ENCODE measurements at regions of chr3 and their contacts with region 1.

Region 1: DNA sequence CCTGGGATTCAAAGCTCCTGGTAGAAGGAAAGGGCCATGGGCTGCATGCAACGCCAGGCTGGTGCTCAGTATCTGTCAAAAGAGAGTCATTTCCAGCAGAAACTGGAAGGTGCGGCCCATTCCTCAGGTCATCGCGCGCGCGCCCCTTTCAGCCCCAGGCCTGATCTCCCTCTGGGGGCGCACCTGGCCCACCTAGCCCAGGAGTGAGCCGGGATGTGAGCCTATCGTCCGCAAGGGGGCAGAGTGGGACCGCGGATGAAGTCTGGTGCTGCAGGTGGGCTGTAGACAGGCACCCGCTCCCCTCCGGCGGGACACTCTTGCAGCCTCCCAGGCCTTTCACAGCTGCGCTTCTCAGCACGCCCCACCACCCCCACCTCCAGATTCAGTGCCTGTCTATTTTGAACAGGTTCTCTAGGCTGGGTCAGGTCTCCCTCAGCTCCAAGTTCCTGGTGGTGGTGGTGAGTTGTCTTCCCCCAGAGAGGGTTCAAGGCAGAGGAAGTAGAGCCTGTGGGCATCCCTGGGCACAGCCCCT is 5.8 kb upstream of the RPL29 start:
- DNase-seq: peak; percentile 77
- H3K4me3 Mint-ChIP-seq: no peak overlapping the region
- H3K27ac Mint-ChIP-seq: no peak overlapping the region
- H3K4me1 Mint-ChIP-seq: peaks cover 8% of the 10 kb centered on the region
- H3K27me3 Mint-ChIP-seq: no peaks in the 10 kb centered on the region
- CTCF ChIP-seq: peak; percentile 97

Region 2: GRCh38 chr3:51860703-51861665 is 140.5 kb before region 1 on chr3 and contains the start of gene IQCF2:
- CTCF ChIA-PET with region 1: no interaction called
- POLR2A ChIA-PET with region 1: no interaction called
- intact Hi-C with region 1: no loop called
- DNase-seq: no peak
- H3K4me3 Mint-ChIP-seq: no peak within 1 kb of the TSS
- H3K27ac Mint-ChIP-seq: no peak within 1 kb of the TSS
- H3K4me1 Mint-ChIP-seq: no peaks in the 10 kb centered on the region
- H3K27me3 Mint-ChIP-seq: peaks cover 41% of the 10 kb centered on the region
- CTCF ChIP-seq: no peak
- total RNA-seq, gene IQCF2: not detected in 2 replicates

Region 3: DNA sequence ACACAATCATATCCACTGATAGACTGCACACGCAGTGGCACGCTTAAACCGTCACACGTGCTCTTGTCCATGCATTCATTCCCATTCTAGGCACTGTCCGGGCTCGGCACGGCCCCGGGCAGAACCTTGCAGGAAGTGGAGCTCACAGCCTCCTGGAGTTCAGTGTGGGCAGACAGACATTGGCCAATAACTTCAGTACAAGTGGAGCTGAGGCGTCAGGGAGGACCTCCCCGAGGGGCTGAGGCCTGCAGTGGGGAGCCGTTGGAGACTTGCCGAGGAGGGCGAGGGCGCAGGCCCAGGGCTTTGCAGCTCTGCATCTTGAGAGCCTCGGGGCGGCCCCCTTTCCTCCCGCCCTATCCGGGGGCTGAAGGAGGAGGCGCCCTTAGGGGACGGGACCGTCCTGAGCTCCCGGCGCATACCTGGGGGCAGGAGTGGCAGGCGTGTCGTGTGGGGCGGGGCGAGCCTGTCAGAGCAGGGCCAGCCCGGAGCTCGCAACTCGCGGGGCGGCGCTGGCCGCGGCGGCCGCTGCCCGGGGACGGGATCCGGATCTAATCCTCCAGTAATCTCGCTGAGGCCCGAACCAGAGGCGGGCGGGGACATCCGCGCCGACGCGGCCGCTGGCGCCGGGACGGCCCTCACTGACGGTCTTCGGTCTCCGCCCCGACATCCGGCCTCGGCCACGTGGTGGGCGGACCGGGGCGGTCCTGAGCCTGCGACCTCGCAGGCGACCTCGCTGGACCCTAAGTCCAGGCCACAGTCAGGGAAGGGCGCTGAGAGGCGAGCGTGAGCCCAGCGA is 18.5 kb before region 1 on chr3 and contains the start of gene ACY1:
- CTCF ChIA-PET with region 1: interaction called, 14 read pairs
- POLR2A ChIA-PET with region 1: interaction called, 93 read pairs
- intact Hi-C with region 1: no loop called
- DNase-seq: peak; percentile 87
- H3K4me3 Mint-ChIP-seq: peak within 1 kb of the TSS; percentile 87
- H3K27ac Mint-ChIP-seq: peak within 1 kb of the TSS; percentile 98
- H3K4me1 Mint-ChIP-seq: peaks cover 25% of the 10 kb centered on the region
- H3K27me3 Mint-ChIP-seq: no peaks in the 10 kb centered on the region
- CTCF ChIP-seq: no peak
- total RNA-seq, gene ACY1: 109 and 164 TPM in 2 replicates

Region 4: DNA sequence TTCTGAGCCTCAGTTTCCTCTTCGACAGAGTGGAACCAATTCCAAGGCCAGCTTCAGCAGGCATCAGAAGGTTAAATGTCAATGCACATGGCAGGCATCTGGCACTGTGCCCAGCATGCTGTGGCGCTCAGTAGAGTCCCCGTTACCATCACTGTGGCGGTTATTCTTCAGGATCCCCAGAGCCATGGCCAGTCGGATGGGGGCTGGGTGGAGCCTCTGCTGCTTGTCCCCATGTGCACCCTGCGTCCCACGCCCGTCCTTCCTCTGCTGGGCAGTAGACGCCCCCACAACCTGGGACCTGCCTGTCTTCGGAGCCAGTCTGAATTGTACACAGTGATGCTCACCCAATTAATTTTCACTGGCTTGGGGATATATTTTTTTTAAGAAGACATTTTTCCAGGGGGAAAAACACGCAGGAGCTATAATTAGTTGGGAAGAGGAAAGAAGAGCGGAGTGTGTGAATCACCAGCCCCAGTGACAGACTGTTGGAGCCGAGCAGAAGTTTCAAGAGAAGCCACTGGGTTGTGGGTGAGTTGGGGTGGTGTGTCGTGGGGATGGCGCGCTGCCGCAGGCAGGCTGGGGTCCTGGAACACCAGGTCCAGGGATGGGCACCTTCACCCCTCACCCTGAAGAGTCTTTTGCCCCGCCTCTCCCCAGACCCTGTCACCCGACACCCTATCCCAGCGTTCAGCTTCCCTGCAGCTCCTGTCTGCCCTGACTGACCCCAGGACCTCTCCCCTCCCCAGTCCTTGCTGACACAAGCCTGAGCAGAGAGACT is 21.0 kb after region 1 on chr3:
- CTCF ChIA-PET with region 1: interaction called, 14 read pairs
- POLR2A ChIA-PET with region 1: no interaction called
- intact Hi-C with region 1: no loop called
- DNase-seq: no peak
- H3K4me3 Mint-ChIP-seq: no peak overlapping the region
- H3K27ac Mint-ChIP-seq: no peak overlapping the region
- H3K4me1 Mint-ChIP-seq: peaks cover 6% of the 10 kb centered on the region
- H3K27me3 Mint-ChIP-seq: no peaks in the 10 kb centered on the region
- CTCF ChIP-seq: no peak

Region 5: DNA sequence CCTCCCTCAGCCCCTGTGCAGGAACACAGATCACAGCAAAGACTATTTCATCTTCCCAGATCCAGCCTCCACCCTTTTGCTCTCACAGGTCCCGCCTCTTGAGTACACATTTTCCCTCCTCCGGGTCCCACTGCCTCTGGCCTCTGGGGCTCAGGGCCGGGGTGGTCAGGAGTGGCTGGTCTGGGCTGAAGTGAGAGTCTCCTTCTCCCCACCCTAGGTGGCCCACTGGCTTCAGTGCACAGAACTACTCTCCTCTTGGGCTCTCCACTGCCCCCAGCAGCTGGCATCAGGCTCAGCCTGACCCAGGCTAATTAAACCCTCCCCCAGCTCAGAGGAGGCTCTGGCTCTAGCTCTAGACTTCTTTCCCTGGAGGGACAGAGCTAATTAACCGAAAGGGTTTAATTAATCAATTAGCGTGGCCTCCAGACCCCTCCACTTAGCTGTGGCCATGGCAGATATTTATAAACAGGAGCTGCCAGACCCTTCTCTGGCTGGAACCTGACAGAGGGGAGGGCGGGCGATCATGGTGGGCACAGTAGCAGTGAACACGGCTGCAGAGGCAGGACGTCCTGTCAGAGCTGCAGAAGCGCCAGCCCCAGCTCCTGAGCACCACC is 39.7 kb after region 1 on chr3:
- CTCF ChIA-PET with region 1: interaction called, 15 read pairs
- POLR2A ChIA-PET with region 1: interaction called, 6 read pairs
- intact Hi-C with region 1: no loop called
- DNase-seq: no peak
- H3K4me3 Mint-ChIP-seq: no peak overlapping the region
- H3K27ac Mint-ChIP-seq: no peak overlapping the region
- H3K4me1 Mint-ChIP-seq: peaks cover 45% of the 10 kb centered on the region
- H3K27me3 Mint-ChIP-seq: no peaks in the 10 kb centered on the region
- CTCF ChIP-seq: no peak

Region 6: DNA sequence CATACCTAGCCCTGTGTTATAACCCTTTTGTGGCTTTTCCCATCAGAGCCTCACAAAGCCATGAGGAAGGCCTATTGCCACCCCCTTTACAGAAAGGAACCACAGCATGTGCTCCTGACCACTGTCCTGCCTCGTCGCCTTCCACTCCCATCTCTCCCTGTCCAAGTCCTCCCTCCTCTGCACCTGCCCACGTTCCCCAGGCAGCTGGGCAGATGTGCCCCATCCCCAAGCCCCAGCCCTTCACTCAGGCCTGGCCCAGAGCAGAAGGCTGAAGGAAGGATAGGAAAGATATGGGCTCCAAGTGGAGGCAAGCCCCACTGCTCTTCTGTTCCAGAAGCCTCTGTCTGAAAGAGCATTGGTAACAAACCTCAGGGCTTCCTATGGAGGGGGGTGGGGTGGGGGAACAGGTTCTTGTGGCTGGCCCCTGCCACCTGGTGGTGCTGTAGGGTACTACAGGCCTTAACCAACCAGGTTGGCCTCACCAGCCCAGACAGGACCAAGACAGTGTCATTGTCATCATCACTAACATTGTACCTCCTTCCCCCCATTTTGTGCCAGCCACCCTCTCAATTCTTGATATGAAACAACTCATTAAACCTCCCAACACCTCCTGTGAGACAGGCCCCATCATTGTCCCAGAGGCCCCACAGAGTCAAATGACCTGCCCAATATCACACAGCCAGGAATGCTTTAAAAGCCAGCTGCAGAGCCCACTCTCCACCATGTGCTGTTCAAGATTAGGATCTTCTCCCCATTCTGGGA is 142.7 kb after region 1 on chr3:
- CTCF ChIA-PET with region 1: interaction called, 230 read pairs
- POLR2A ChIA-PET with region 1: no interaction called
- intact Hi-C with region 1: loop called (anchors 1 kb)
- DNase-seq: peak; percentile 79
- H3K4me3 Mint-ChIP-seq: no peak overlapping the region
- H3K27ac Mint-ChIP-seq: peak overlapping the region; percentile 31
- H3K4me1 Mint-ChIP-seq: no peaks in the 10 kb centered on the region
- H3K27me3 Mint-ChIP-seq: no peaks in the 10 kb centered on the region
- CTCF ChIP-seq: peak; percentile 89

Region 7: DNA sequence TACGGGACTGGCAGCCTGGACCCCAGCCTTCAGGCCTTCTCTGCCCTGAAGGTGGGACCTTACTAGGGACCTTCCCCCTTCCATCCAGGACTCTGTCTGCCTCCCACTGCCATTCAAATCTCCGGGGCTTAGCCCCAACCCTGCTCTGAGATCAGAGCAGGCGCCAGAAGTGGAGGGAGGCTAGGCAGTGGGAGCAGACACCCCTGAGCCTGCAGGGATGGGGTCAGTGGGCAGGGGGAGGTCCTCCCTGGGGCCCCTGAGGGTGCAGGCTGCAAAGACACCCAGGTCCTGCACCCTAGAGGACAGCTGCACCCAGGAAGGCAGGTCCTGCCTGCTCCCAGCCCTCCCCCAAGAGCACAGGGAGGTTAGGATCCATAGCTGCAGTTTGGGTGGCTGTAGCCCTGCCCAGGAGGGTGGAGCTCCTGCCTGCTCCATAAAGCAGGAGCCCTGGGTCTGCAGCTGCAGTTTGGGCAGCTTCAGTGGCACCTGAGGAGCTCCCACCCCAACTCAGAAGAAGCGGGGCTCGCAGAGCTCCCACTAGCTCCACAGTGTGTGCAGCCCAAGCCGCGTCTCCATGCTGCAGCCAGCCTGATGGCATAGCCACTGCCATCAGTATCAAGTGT is 160.9 kb after region 1 on chr3:
- CTCF ChIA-PET with region 1: interaction called, 10 read pairs
- POLR2A ChIA-PET with region 1: no interaction called
- intact Hi-C with region 1: no loop called
- DNase-seq: no peak
- H3K4me3 Mint-ChIP-seq: no peak overlapping the region
- H3K27ac Mint-ChIP-seq: no peak overlapping the region
- H3K4me1 Mint-ChIP-seq: no peaks in the 10 kb centered on the region
- H3K27me3 Mint-ChIP-seq: no peaks in the 10 kb centered on the region
- CTCF ChIP-seq: no peak

Region 8: DNA sequence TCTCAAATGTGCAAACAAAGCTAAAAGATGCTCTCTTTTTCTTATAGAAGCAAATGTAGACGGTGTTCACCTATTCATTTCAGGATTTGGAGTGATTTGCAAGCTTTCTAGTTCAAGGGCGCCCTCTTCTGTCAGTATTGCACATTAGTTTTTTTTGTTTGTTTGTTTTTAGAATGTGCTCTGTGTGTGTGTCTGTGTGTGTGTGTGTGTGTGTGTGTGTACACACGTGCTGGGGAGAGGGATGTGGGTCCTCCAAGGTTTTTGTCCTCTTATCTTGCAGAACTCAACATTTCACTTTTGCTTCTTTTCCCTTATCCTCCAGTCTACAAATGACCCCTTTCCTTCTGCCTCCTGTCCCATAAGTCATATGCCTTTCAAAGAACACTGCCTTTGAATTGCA is 338.1 kb after region 1 on chr3:
- CTCF ChIA-PET with region 1: interaction called, 8 read pairs
- POLR2A ChIA-PET with region 1: interaction called, 3 read pairs
- intact Hi-C with region 1: loop called (anchors 5 kb)
- DNase-seq: peak; percentile 83
- H3K4me3 Mint-ChIP-seq: no peak overlapping the region
- H3K27ac Mint-ChIP-seq: no peak overlapping the region
- H3K4me1 Mint-ChIP-seq: peaks cover 6% of the 10 kb centered on the region
- H3K27me3 Mint-ChIP-seq: peaks cover 7% of the 10 kb centered on the region
- CTCF ChIP-seq: peak; percentile 62

Measured in MCF 10A (cell line).